SK-N-SH (cell line): ENCODE measurements at regions of chr1 and their contacts with region 1.

Region 1: DNA sequence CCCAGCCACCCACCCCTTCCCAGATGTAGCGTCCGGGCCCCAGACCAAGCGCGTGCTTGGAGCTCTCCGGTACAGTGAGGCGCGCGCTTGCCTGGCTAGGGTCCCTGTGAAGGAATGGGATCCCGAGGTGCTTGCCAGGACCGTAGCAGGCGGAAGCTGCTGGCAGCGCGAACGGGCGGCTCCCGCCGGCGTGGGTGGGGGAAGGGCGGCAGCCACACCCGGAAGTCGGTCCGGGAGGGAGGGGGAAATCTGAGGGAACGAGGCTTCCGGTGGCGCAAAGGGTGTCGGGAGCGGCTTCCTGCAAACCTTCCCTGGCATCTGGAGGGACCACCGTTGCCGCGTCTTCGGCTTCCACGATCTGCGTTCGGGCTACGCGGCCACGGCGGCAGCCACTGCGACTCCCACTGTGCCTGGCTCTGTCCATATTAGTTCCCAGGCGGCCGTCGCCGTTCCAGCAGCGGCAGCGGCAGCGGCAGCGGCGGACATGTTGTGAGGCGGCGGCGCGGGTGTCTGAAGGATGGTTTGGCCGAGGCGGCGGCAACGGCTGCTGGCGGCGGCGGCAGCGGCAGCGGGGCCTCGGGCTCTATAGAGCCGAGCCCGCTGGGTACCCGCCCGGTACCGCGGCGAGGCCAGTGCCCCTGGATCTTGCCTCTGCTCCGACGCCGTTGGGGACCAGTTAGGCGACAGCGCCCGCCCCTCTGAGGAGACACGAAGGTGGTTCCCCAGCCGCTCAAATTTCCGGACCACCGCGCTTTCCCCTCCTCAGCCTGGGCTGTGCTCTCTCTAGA is at the start of gene DR1:
- DNase-seq: peak; percentile 98
- H3K4me3 ChIP-seq: peak within 1 kb of the TSS; percentile 91 to 96
- H3K27ac ChIP-seq: peak within 1 kb of the TSS; percentile 98 to 99
- H3K4me1 ChIP-seq: peaks cover 4 to 7% of the 10 kb centered on the region in 2 experiments; a peak in 2 of 4 replicates
- H3K27me3 ChIP-seq: no peaks in the 10 kb centered on the region
- CTCF ChIP-seq: no peak
- EP300 ChIP-seq: peak in 1 of 2 experiments; percentile 81; a peak in 1 of 4 replicates
- RAD21 ChIP-seq: no peak
- polyA plus RNA-seq, gene DR1: 12.8 and 17.5 TPM in 2 replicates

Region 2: DNA sequence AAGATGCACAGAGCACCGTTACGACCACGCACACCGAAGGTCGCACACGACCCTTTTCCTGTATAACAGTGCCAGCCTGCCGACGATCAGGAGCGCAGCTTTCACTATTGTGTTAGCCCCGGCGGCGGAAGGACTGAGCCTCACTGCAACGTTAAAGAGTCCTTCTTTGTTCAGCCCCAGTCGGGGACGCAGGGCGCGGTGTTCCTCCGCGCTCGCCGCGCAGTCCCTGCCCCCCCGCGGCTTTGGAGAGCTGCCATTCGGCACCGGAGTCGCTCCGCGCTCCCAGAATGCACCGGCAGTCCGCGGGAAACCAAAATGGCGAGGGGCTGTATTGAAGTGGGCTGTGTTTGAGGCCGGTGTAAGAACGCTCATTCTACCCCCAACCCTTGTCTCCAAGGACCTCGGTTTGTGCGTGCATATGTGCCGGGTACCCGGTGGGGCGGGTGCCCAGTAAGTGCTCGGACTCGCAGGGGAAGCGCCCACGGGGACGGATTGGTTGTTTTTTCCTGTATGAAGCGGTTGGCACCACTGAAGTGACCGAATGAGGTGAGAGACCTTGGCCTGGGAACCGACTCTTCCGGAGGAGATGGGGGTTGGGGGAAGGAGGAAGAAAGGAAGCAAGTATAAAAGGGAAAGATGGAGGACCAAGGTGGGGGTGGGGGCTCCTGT is 266.7 kb before region 1 on chr1 and contains the start of gene MTF2:
- CTCF ChIA-PET with region 1: no interaction called
- POLR2A ChIA-PET with region 1: interaction called, 11 read pairs
- DNase-seq: peak; percentile 90
- H3K4me3 ChIP-seq: peak within 1 kb of the TSS; percentile 86 to 87
- H3K27ac ChIP-seq: peak within 1 kb of the TSS; percentile 78 to 96
- H3K4me1 ChIP-seq: peaks cover 0 to 6% of the 10 kb centered on the region in 2 experiments; a peak in 2 of 4 replicates
- H3K27me3 ChIP-seq: no peaks in the 10 kb centered on the region
- CTCF ChIP-seq: no peak
- EP300 ChIP-seq: peak; percentile 74 to 78; a peak in 3 of 4 replicates
- RAD21 ChIP-seq: peak; percentile 18; the same call in 1 of the 2 replicates
- polyA plus RNA-seq, gene MTF2: 11.9 and 15.3 TPM in 2 replicates